A549 (cell line): ENCODE measurements at regions of chrX and their contacts with region 1.

Region 1: GRCh38 chrX:109485470-109486340 is 3.8 kb upstream of the GUCY2F start:
- DNase-seq: peak; percentile 15 to 70
- ATAC-seq: peak in 1 of 2 experiments; percentile 54; a peak in 3 of 6 replicates
- H3K4me3 ChIP-seq: no peak overlapping the region
- H3K27ac ChIP-seq: no peak overlapping the region
- H3K4me1 ChIP-seq: no peaks in the 10 kb centered on the region
- CTCF ChIP-seq: peak; percentile 97
- EP300 ChIP-seq: no peak
- POLR2A ChIP-seq: no peak
- RAD21 ChIP-seq: peak; percentile 78 to 85

Region 2: DNA sequence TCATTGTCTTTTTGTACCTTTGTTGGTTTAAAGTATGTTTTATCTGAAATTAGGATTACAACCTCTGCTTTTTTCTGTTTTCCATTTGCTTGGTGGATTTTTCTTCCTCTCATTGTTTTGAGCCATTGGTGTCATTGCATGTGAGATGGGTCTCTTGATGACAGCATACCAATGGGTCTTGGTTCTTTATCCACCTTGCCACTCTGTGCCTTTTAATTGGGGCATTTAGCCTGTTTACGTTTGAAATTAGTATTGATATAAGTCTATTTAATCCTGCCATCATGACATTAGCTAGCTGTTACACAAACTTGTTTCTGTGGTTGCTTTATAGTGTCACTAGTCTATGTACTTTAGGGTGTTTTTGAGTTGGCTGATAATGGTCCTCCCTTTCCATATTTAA is 149.6 kb before region 1 on chrX:
- CTCF ChIA-PET with region 1: no interaction called
- POLR2A ChIA-PET with region 1: no interaction called
- DNase-seq: no peak
- ATAC-seq: no peak
- H3K4me3 ChIP-seq: no peak overlapping the region
- H3K27ac ChIP-seq: no peak overlapping the region
- H3K4me1 ChIP-seq: no peaks in the 10 kb centered on the region
- CTCF ChIP-seq: no peak
- EP300 ChIP-seq: no peak
- POLR2A ChIP-seq: no peak
- RAD21 ChIP-seq: no peak

Region 3: GRCh38 chrX:109475174-109475891 is 10.4 kb before region 1 on chrX:
- CTCF ChIA-PET with region 1: interaction called, 23 read pairs
- POLR2A ChIA-PET with region 1: no interaction called
- DNase-seq: peak; percentile 18 to 54
- ATAC-seq: peak; percentile 91 to 98
- H3K4me3 ChIP-seq: no peak overlapping the region
- H3K27ac ChIP-seq: no peak overlapping the region
- H3K4me1 ChIP-seq: no peaks in the 10 kb centered on the region
- CTCF ChIP-seq: peak; percentile 50
- EP300 ChIP-seq: no peak
- POLR2A ChIP-seq: no peak
- RAD21 ChIP-seq: peak; percentile 33 to 36; a peak in 3 of 5 replicates

Region 4: DNA sequence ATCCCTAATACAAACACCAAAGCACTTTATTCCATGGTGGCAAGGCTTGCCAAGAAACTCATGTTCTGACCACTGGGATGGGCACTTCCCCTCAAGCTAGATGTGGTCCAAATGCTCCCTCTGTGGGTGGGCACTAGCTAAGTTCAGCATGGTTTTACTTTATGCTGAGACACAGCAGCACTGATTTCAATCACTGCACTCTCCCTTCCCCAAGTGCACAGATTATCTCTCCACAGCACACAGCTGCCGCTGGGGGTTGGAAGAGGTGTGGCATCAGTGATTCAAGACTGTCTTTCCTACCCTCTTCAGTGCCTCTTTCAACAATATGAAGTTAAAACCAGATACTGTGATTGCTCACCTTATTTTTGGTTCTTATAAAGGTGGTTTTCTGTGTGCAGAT is 12.7 kb after region 1 on chrX:
- CTCF ChIA-PET with region 1: interaction called, 13 read pairs
- POLR2A ChIA-PET with region 1: no interaction called
- DNase-seq: no peak
- ATAC-seq: no peak
- H3K4me3 ChIP-seq: no peak overlapping the region
- H3K27ac ChIP-seq: no peak overlapping the region
- H3K4me1 ChIP-seq: no peaks in the 10 kb centered on the region
- CTCF ChIP-seq: no peak
- EP300 ChIP-seq: no peak
- POLR2A ChIP-seq: no peak
- RAD21 ChIP-seq: no peak

Region 5: GRCh38 chrX:109635176-109635575 is 149.5 kb after region 1 on chrX:
- CTCF ChIA-PET with region 1: interaction called, 31 read pairs
- POLR2A ChIA-PET with region 1: no interaction called
- DNase-seq: peak; percentile 3 to 15
- ATAC-seq: peak; percentile 66 to 79; a peak in 4 of 6 replicates
- H3K4me3 ChIP-seq: no peak overlapping the region
- H3K27ac ChIP-seq: no peak overlapping the region
- H3K4me1 ChIP-seq: no peaks in the 10 kb centered on the region
- CTCF ChIP-seq: peak; percentile 42
- EP300 ChIP-seq: no peak
- POLR2A ChIP-seq: no peak
- RAD21 ChIP-seq: 0 out of 5 replicates have a peak, but pooled peaks of 1 of the 2 experiments have one; percentile 7